Panc1 (cell line): ENCODE measurements at regions of chr2 and their contacts with region 1.

Region 1: GRCh38 chr2:231399853-231400680 is 4.6 kb downstream of the B3GNT7 start:
- DNase-seq: no peak
- ATAC-seq: peak; percentile 66
- H3K4me3 ChIP-seq: peak overlapping the region in 1 of 2 experiments; percentile 50; a peak in 2 of 4 replicates
- H3K27ac ChIP-seq: peak overlapping the region; percentile 90
- H3K4me1 ChIP-seq: peaks cover 67% of the 10 kb centered on the region
- H3K27me3 ChIP-seq: no peaks in the 10 kb centered on the region
- CTCF ChIP-seq: no peak

Region 2: DNA sequence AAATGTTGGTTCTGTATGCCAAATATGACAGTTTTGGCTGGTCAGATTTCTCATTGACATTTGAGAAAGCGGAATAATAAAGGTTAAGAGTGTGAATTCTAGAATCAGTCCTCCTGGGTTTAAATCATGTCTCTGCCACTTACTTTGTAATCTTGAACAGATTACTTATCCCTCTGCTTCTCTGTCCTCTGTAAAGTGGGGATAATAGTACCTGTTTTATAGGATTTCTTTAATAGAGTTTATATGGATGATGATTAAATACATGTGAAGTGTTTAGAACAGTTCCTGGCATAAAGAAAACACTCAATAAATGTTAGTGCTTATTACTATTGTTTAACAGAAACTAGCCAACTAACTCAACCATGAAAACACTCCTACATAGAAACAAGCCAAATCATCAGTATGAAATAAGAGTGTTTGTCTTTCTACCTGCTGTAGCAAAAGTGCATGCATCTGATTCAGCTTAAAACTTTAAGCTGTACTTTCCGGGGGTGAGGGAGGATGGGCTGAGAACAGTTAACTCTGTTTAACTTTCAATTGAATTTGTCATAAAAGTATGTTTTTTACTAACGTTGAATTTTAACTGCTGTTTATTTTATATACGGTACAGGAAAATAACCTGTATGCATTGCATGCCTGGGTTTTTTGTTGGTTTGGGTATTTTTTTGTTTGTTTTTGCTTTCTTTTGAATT is 282.0 kb before region 1 on chr2:
- CTCF ChIA-PET with region 1: no interaction called
- POLR2A ChIA-PET with region 1: no interaction called
- in situ Hi-C with region 1: no loop called
- intact Hi-C with region 1: no loop called
- DNase-seq: no peak
- ATAC-seq: peak; percentile 42; the same call in 1 of the 2 replicates
- H3K4me3 ChIP-seq: no peak overlapping the region
- H3K27ac ChIP-seq: no peak overlapping the region; the same call in 1 of the 2 replicates
- H3K4me1 ChIP-seq: peaks cover 6% of the 10 kb centered on the region
- H3K27me3 ChIP-seq: no peaks in the 10 kb centered on the region
- CTCF ChIP-seq: no peak

Region 3: DNA sequence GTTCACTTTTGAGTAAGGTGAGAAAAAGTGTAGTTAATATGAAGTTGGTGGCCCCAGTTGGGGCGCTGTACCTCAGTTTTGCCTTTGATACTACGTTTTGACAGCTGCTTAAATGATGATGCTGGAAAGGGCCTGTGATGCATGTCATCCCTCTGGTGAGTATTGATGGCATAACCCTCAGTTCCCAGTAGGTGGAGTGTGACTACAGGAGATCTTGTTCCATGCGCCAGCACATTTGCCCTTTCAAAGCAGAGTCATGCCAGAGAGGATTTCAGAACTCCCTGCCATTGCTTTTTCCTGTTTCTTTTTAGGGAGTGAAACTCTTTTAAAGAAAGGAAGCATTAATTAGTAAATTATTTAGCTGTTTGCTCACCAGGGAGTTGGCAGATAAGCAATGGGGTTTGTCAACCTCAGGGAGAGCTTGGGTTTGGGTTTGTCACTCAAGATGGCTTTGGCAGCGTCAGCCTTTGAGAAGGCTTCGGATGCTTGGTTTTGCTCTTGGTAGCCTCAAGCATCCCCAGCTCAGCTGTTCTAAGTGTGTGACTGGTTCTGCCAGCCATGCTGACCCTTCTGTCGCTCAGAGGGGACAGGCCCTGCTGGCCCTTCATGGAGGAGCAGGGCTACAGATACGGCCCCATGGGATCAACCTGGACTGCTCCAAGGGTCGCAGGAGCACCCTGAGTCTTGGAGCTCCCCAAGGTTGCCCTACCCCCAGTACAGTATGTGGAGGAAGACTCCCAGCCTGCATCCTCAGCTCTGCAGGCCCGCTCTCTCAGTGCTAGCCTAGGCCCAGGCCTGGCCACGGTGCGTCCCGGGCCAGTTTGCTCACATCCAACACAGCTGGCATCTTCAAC is 172.5 kb before region 1 on chr2:
- CTCF ChIA-PET with region 1: interaction called, 11 read pairs
- POLR2A ChIA-PET with region 1: no interaction called
- in situ Hi-C with region 1: no loop called
- intact Hi-C with region 1: no loop called
- DNase-seq: peak; percentile 46
- ATAC-seq: peak; percentile 98
- H3K4me3 ChIP-seq: no peak overlapping the region
- H3K27ac ChIP-seq: peak overlapping the region; percentile 20; the same call in 1 of the 2 replicates
- H3K4me1 ChIP-seq: 0 out of 2 replicates have a peak, but pooled peaks cover 4% of the 10 kb centered on the region
- H3K27me3 ChIP-seq: no peaks in the 10 kb centered on the region
- CTCF ChIP-seq: peak; percentile 88

Region 4: GRCh38 chr2:231297108-231297908 is 102.8 kb before region 1 on chr2:
- CTCF ChIA-PET with region 1: interaction called, 8 read pairs
- POLR2A ChIA-PET with region 1: no interaction called
- in situ Hi-C with region 1: loop called (anchors 25 kb)
- intact Hi-C with region 1: loop called (anchors 2 kb)
- DNase-seq: peak; percentile 45
- ATAC-seq: peak; percentile 94
- H3K4me3 ChIP-seq: no peak overlapping the region
- H3K27ac ChIP-seq: peak overlapping the region; percentile 67
- H3K4me1 ChIP-seq: peaks cover 15% of the 10 kb centered on the region
- H3K27me3 ChIP-seq: no peaks in the 10 kb centered on the region
- CTCF ChIP-seq: peak; percentile 92

Region 5: GRCh38 chr2:231503766-231504165 is 103.7 kb after region 1 on chr2:
- CTCF ChIA-PET with region 1: no interaction called
- POLR2A ChIA-PET with region 1: no interaction called
- in situ Hi-C with region 1: no loop called
- intact Hi-C with region 1: no loop called
- DNase-seq: no peak
- ATAC-seq: no peak
- H3K4me3 ChIP-seq: no peak overlapping the region
- H3K27ac ChIP-seq: no peak overlapping the region
- H3K4me1 ChIP-seq: no peaks in the 10 kb centered on the region
- H3K27me3 ChIP-seq: no peaks in the 10 kb centered on the region
- CTCF ChIP-seq: no peak